ENCODE measurements at regions of chr9 and their contacts with region 1.

Region 1: GRCh38 chr9:132651254-132651653 is 18.5 kb downstream of the DDX31 start:
- DNase-seq: peak; percentile 45 to 71
- H3K4me3 ChIP-seq: no peak overlapping the region
- H3K27ac ChIP-seq: no peak overlapping the region
- H3K4me1 ChIP-seq: 0 out of 2 replicates have a peak, but pooled peaks cover 5% of the 10 kb centered on the region
- H3K27me3 ChIP-seq: no peaks in the 10 kb centered on the region
- CTCF ChIP-seq: peak; percentile 64; the same call in 1 of the 2 replicates

Region 2: GRCh38 chr9:132679946-132680625 is 28.8 kb after region 1 on chr9:
- CTCF ChIA-PET with region 1: no interaction called
- POLR2A ChIA-PET with region 1: interaction called, 20 read pairs
- intact Hi-C with region 1: no loop called
- DNase-seq: no peak
- H3K4me3 ChIP-seq: no peak overlapping the region
- H3K27ac ChIP-seq: no peak overlapping the region
- H3K4me1 ChIP-seq: no peaks in the 10 kb centered on the region
- H3K27me3 ChIP-seq: no peaks in the 10 kb centered on the region
- CTCF ChIP-seq: no peak

Region 3: DNA sequence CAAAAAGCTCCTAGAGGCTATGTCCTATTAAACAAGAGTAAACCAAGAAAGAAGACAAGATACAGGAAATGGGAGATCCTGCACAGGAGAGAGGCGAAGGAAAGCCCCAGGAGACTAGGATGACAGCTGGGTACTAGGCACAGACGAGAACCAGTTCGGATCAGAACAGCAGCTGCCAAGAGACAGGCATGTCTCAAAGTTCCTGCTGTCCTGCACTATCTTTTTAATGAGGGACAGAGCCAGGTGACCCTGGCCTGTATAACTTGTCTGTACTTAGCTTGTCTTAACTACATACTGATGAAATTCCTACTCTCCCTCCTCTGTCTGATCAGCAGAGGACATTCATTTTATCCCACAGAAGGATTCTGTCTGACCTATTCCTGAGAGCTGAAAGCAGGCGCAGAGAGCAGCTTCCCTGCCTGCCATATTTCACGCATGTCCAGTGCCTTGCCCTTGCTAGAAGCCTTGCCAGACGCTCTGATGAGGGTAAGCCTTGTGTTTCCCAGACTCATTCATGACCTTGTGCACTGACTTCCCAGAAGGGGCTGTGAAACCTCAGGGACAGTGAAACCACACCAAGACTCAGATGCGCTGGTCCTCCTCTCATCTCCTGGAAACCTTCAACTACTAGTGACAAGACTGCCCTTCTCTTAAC is 268.5 kb after region 1 on chr9:
- CTCF ChIA-PET with region 1: no interaction called
- POLR2A ChIA-PET with region 1: no interaction called
- intact Hi-C with region 1: no loop called
- DNase-seq: no peak
- H3K4me3 ChIP-seq: no peak overlapping the region
- H3K27ac ChIP-seq: no peak overlapping the region
- H3K4me1 ChIP-seq: no peaks in the 10 kb centered on the region
- H3K27me3 ChIP-seq: no peaks in the 10 kb centered on the region
- CTCF ChIP-seq: no peak

Region 4: DNA sequence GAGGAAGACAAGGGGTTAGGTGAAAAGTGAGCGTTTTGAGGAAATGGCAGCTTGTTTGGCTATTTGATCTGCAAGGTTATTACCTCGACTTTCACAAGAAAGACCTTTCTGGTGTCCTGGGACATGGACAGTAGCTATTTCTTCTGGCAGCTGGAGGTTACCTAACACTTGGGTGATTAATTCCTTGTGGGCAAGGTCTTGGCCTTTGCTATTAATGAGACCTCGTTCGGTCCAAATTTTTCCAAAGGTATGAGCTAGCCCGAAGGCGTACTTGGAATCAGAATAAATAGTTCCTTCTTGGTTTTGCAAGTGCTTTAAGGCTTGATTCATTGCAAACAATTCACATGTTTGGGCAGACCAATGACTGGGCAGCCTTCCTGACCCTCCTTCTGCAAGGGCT is 384.4 kb after region 1 on chr9:
- CTCF ChIA-PET with region 1: no interaction called
- POLR2A ChIA-PET with region 1: interaction called, 22 read pairs
- intact Hi-C with region 1: no loop called
- DNase-seq: peak in 1 of 2 experiments; percentile 54
- H3K4me3 ChIP-seq: no peak overlapping the region
- H3K27ac ChIP-seq: no peak overlapping the region
- H3K4me1 ChIP-seq: peaks cover 14% of the 10 kb centered on the region
- H3K27me3 ChIP-seq: no peaks in the 10 kb centered on the region
- CTCF ChIP-seq: no peak